Psoas muscle (tissue), 8 donors: ENCODE measurements at regions of chr5 and their contacts with region 1.

Region 1: DNA sequence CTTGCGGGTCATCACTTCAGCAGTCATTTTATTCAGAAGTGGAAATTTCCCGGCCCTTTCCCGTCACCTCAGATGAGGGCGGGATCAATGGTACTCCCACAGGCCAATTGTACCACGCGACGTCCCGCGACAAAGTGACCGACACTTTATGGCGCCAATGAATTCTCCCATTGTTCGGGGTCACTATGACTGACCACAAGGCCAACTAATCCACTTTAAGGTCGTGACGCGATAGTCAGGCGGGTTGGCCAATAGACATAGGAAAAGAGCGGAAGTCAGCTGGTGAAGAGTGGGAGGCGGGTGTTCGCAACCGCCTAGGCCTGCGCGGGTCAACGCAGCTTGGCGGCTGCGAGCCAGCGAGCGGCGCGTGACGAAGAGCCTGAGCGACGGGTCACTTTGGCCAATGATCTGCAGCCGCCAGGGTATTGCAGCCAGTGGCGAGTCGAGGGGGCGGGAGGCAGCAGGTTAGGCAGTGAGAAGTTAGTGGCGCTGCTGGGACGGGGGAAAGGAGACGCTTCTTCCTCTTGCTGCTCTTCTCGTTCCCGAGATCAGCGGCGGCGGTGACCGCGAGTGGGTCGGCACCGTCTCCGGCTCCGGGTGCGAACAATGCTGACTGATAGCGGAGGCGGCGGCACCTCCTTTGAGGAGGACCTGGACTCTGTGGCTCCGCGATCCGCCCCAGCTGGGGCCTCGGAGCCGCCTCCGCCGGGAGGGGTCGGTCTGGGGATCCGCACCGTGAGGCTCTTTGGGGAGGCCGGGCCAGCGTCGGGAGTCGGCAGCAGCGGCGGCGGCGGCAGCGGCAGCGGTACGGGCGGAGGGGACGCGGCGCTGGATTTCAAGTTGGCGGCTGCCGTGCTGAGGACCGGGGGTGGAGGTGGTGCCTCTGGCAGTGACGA is at the start of gene ANKHD1:
- DNase-seq: peak; percentile 98 to 99
- ATAC-seq: peak; percentile 89 to 92 (median 92)
- H3K4me3 ChIP-seq: peak within 1 kb of the TSS; percentile 98
- H3K27ac ChIP-seq: peak within 1 kb of the TSS; percentile 98
- H3K4me1 ChIP-seq: peaks cover 31% of the 10 kb centered on the region
- H3K27me3 ChIP-seq: no peaks in the 10 kb centered on the region
- CTCF ChIP-seq: no peak
- total RNA-seq, gene ANKHD1: 50.7 to 86.1 (median 72.0) TPM

Region 2: DNA sequence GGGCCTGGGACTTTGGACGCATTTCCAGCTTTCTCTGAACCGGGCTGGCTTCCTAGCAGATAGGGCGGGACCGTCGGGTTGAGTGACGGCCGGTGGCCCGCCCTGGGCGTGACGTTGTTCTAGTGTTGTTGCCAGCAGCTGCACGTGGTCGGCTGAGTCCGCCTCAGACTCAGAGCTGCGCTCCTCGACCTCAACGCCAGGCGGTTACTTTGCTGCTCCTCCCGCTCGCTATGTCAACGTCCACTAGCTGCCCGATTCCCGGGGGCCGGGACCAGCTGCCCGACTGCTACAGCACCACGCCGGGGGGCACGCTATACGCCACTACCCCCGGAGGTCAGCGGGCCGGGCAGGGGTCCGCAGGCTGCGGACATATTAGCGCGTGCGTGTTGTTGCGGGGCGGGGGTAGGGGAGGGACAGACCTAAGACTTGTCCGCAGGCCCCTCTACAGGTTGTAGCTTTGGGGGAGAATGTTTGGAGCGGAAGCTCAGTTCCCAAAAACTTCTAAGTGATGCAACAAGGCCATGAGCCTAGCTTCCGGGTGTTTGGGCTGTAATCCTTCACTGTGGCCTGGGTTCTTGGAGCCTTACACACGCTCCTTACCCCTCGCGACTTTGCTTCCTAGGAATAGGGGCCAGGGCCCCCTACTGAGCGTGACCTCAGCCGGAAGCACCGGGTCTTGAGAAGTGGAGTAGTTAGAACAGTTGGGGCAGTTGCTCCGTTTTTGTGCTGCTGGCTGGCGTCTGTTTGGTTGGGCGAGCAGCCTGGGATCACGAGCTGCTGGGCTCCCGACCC is 146.1 kb after region 1 on chr5 and contains the start of gene EIF4EBP3:
- intact Hi-C with region 1: loop called in 1 of 2 experiments (anchors 2 kb)
- DNase-seq: peak; percentile 97 to 99
- ATAC-seq: peak; percentile 88 to 92 (median 90)
- H3K4me3 ChIP-seq: peak within 1 kb of the TSS; percentile 67
- H3K27ac ChIP-seq: peak within 1 kb of the TSS; percentile 98
- H3K4me1 ChIP-seq: peaks cover 43% of the 10 kb centered on the region
- H3K27me3 ChIP-seq: no peaks in the 10 kb centered on the region
- CTCF ChIP-seq: peak; percentile 66
- total RNA-seq, gene EIF4EBP3: 31.7 to 116 (median 40.5) TPM

Region 3: GRCh38 chr5:140639148-140639979 is 237.8 kb after region 1 on chr5 and contains the start of gene TMCO6:
- intact Hi-C with region 1: loop called (anchors 10 kb)
- DNase-seq: peak; percentile 99
- ATAC-seq: peak; percentile 99
- H3K4me3 ChIP-seq: peak within 1 kb of the TSS; percentile 82
- H3K27ac ChIP-seq: peak within 1 kb of the TSS; percentile 90
- H3K4me1 ChIP-seq: peaks cover 7% of the 10 kb centered on the region
- H3K27me3 ChIP-seq: no peaks in the 10 kb centered on the region
- CTCF ChIP-seq: peak; percentile 66
- total RNA-seq, gene TMCO6: 3.6 to 4.9 (median 4.1) TPM

Region 4: GRCh38 chr5:140647042-140647341 is 245.4 kb after region 1 on chr5:
- intact Hi-C with region 1: loop called in 1 of 2 experiments (anchors 10 kb)
- DNase-seq: no peak
- ATAC-seq: peak in 2 of 4 donors; percentile 18 to 39
- H3K4me3 ChIP-seq: peak overlapping the region; percentile 89
- H3K27ac ChIP-seq: peak overlapping the region; percentile 84
- H3K4me1 ChIP-seq: peaks cover 21% of the 10 kb centered on the region
- H3K27me3 ChIP-seq: no peaks in the 10 kb centered on the region
- CTCF ChIP-seq: no peak

Region 5: GRCh38 chr5:140690941-140691924 is 289.6 kb after region 1 on chr5 and contains the starts of genes HARS1 and HARS2:
- intact Hi-C with region 1: loop called in 1 of 2 experiments (anchors 5 kb)
- DNase-seq: peak; percentile 89 to 94
- ATAC-seq: peak; percentile 98
- H3K4me3 ChIP-seq: peak within 1 kb of the TSS; percentile 99
- H3K27ac ChIP-seq: peak within 1 kb of the TSS; percentile 92
- H3K4me1 ChIP-seq: peaks cover 18% of the 10 kb centered on the region
- H3K27me3 ChIP-seq: no peaks in the 10 kb centered on the region
- CTCF ChIP-seq: no peak
- total RNA-seq, gene HARS1: 29.5 to 48.1 (median 38.9) TPM
- total RNA-seq, gene HARS2: 19.8 to 35.1 (median 23.2) TPM

Region 6: GRCh38 chr5:141001466-141001853 is 599.9 kb after region 1 on chr5:
- intact Hi-C with region 1: no loop called
- DNase-seq: no peak
- ATAC-seq: no peak
- H3K4me3 ChIP-seq: no peak overlapping the region
- H3K27ac ChIP-seq: no peak overlapping the region
- H3K4me1 ChIP-seq: no peaks in the 10 kb centered on the region
- H3K27me3 ChIP-seq: peaks cover 2 to 18% (median 5%) of the 10 kb centered on the region in 3 donors
- CTCF ChIP-seq: no peak